Upper lobe of right lung (tissue), 1 donor: ENCODE measurements at regions of chr11 and their contacts with region 1.

Region 1: GRCh38 chr11:57493507-57494503 is 21.7 kb downstream of the SLC43A1 start:
- DNase-seq: peak; percentile 86
- ATAC-seq: peak; percentile 91
- H3K4me3 ChIP-seq: no peak overlapping the region
- H3K27ac ChIP-seq: no peak overlapping the region
- H3K4me1 ChIP-seq: peaks cover 6% of the 10 kb centered on the region
- H3K27me3 ChIP-seq: no peaks in the 10 kb centered on the region
- CTCF ChIP-seq: peak; percentile 94

Region 2: DNA sequence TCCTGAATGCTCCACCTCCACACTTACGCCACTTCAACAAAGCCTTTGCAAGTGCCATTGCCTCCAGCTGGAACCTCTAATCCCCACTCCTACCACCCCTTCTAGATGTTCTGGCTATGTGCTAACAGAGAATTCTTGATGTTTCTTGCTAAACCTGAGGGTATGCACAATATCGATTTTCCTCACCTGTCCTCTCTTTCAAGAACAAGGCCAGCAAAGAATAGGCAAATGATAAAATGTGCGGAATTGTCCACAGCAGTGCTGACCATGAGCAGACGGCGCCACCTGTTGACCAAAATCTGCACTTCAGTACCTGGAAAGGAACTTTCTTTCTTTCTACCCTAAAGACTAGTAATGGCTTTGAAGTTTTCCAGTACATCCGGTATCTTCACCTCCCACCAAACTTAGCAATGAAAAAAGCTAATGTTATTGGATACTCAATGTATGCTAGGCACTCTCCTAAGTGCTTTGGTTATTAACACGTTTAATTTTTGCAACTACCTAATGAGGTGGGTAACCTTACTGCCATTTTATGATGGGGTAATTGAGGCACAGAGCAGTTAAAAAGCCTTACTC is 33.3 kb after region 1 on chr11:
- intact Hi-C with region 1: loop called (anchors 5 kb)
- DNase-seq: no peak
- ATAC-seq: peak; percentile 45
- H3K4me3 ChIP-seq: no peak overlapping the region
- H3K27ac ChIP-seq: no peak overlapping the region
- H3K4me1 ChIP-seq: peaks cover 15% of the 10 kb centered on the region
- H3K27me3 ChIP-seq: no peaks in the 10 kb centered on the region
- CTCF ChIP-seq: peak; percentile 95